ENCODE measurements at regions of chr17 and their contacts with region 1.

Region 1: GRCh38 chr17:2266045-2266864 is 37.3 kb downstream of the SMG6 start:
- DNase-seq: peak; percentile 75
- ATAC-seq: peak; percentile 78
- H3K4me3 Mint-ChIP-seq: peak overlapping the region; percentile 85
- H3K27ac Mint-ChIP-seq: peak overlapping the region; percentile 98
- H3K4me1 Mint-ChIP-seq: peaks cover 73% of the 10 kb centered on the region
- H3K27me3 Mint-ChIP-seq: no peaks in the 10 kb centered on the region

Region 2: DNA sequence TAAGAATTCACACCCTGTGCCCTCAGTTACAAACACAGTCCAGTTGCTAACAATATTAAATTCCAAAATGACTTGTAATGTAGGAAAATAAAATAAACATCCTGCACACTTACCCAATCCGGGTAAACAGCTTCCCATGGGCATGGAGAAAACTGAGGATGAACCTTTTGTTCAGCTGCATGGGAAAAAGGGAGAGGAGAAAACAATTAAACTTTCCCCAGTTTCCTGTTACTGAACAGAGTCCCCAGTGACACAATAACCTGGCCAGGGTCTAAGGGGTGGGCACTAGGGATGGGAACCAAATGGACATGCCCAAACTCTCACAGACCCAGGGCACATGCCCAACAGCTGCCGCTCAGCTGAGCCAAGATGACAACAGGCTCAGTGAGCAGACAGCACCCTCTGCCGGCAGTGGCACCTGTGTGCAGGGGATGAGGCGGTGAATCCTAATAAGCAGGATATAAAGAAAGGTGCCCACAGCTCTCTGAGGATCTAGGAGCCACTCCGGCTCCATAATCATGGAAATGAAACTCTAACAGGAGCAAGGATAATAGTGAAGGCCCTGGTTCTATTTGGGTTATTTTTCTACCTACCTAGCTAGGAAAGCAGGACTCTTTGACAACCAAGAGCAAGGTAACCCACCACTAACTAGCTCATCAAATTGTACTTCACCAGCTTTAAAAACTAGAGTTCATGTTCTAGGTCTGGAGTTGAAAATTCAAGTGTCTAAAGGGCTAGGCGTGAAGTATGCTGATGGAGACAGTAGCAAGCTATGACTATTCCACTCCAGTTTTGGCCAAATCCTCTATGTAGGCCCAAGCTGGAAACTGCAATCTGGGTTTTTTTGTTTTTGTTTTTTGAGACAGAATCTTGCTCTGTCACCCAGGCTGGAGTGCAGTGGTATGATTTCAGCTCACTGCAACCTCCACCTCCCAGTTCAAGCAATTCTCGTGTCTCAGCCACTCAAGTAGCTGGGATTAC is 21.4 kb before region 1 on chr17:
- POLR2A ChIA-PET with region 1: interaction called, 86 read pairs
- DNase-seq: peak; percentile 86
- ATAC-seq: peak; percentile 91
- H3K4me3 Mint-ChIP-seq: peak overlapping the region; percentile 12
- H3K27ac Mint-ChIP-seq: peak overlapping the region; percentile 81
- H3K4me1 Mint-ChIP-seq: peaks cover 61% of the 10 kb centered on the region
- H3K27me3 Mint-ChIP-seq: no peaks in the 10 kb centered on the region

Region 3: GRCh38 chr17:2253768-2254406 is 12.4 kb before region 1 on chr17:
- POLR2A ChIA-PET with region 1: interaction called, 86 read pairs
- DNase-seq: no peak
- ATAC-seq: peak; percentile 85
- H3K4me3 Mint-ChIP-seq: peak overlapping the region; percentile 67
- H3K27ac Mint-ChIP-seq: peak overlapping the region; percentile 92
- H3K4me1 Mint-ChIP-seq: peaks cover 60% of the 10 kb centered on the region
- H3K27me3 Mint-ChIP-seq: no peaks in the 10 kb centered on the region

Region 4: GRCh38 chr17:2282297-2282873 is 16.1 kb after region 1 on chr17:
- POLR2A ChIA-PET with region 1: interaction called, 23 read pairs
- DNase-seq: no peak
- ATAC-seq: no peak
- H3K4me3 Mint-ChIP-seq: peak overlapping the region; percentile 33
- H3K27ac Mint-ChIP-seq: peak overlapping the region; percentile 54
- H3K4me1 Mint-ChIP-seq: peaks cover 43% of the 10 kb centered on the region
- H3K27me3 Mint-ChIP-seq: no peaks in the 10 kb centered on the region